ENCODE measurements at regions of chr16 and their contacts with region 1.

Region 1: DNA sequence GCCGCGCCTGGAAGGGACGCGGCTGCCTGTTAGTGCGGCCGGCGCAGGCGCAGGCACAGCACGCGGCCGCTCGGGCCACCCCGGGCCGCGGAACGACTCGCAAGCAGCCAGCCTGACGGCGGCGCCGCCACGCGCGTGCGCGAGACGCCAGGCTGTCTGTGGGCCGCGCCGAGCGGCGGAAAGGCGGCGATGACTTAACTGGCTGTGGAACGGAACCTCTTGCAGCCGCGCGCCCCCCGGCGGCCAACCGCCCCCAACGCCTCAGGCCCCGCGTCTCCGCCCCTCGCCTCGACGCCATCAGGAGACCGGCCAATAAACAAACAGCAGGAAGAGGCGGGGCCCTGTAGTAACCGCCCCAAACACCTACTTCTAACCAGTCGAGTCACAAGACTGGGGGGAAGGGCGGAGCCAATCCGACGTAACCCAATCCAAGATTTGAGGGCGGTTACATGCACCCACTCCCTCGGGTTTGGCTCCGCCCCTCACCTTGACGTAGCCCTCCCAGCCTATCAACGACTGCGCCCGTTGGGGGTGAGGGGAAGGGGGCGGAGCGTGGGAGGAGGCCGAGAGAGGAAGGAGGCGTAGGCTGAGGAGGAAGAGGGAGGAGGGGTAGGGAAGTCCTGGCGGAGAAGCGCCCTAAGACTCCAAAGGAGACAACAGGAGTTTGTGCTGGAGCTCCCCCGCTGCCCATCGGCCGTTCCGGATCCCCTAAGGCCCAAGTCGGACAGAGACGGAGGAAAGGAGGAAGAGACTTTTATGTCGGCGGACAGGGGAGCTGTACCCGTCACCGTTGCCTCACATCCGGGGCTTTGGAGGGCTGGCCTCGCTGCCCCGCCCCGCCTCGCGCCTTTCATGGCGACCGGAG is at the start of gene FBRS:
- DNase-seq: peak; percentile 100
- H3K4me3 ChIP-seq: peak within 1 kb of the TSS; percentile 70
- H3K27ac ChIP-seq: peak within 1 kb of the TSS; percentile 97 to 100
- H3K4me1 ChIP-seq: peaks cover 11% of the 10 kb centered on the region
- H3K27me3 ChIP-seq: no peaks in the 10 kb centered on the region
- CTCF ChIP-seq: peak; percentile 89 to 98 (median 92)
- EP300 ChIP-seq: peak; percentile 78
- POLR2A ChIP-seq: peak; percentile 99
- total RNA-seq, gene FBRS: 22.5 to 75.6 (median 63.0) TPM

Region 2: GRCh38 chr16:30370444-30371247 is 287.5 kb before region 1 on chr16 and contains the start of gene TBC1D10B:
- intact Hi-C with region 1: loop called in 1 of 4 experiments (anchors 10 kb)
- DNase-seq: peak; percentile 96 to 100 (median 98)
- H3K4me3 ChIP-seq: peak within 1 kb of the TSS; percentile 72
- H3K27ac ChIP-seq: peak within 1 kb of the TSS; percentile 77 to 81
- H3K4me1 ChIP-seq: peaks cover 6% of the 10 kb centered on the region
- H3K27me3 ChIP-seq: no peaks in the 10 kb centered on the region
- CTCF ChIP-seq: peak in 1 of 3 donors; percentile 43
- EP300 ChIP-seq: no peak
- POLR2A ChIP-seq: no peak
- total RNA-seq, gene TBC1D10B: 18.4 to 46.9 (median 38.0) TPM

Region 3: DNA sequence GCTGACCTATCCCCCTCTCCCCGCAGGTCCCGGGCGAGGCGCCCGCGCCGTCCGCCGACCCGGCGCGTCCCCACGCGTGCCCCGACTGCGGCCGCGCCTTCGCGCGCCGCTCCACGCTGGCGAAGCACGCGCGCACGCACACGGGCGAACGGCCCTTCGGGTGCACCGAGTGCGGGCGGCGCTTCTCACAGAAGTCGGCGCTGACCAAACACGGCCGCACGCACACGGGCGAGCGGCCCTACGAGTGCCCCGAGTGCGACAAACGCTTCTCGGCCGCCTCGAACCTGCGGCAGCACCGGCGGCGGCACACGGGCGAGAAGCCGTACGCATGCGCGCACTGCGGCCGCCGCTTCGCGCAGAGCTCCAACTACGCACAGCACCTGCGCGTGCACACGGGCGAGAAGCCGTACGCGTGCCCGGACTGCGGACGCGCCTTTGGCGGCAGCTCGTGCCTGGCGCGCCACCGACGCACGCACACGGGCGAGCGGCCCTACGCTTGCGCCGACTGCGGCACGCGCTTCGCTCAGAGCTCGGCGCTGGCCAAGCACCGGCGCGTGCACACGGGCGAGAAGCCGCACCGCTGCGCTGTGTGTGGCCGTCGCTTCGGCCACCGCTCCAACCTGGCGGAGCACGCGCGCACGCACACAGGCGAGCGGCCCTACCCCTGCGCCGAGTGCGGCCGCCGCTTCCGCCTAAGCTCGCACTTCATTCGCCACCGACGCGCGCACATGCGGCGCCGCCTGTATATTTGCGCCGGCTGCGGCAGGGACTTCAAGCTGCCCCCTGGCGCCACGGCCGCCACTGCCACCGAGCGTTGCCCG is 240.4 kb before region 1 on chr16:
- intact Hi-C with region 1: no loop called
- DNase-seq: peak; percentile 75 to 91 (median 84)
- H3K4me3 ChIP-seq: peak overlapping the region; percentile 46
- H3K27ac ChIP-seq: peak overlapping the region; percentile 3 to 69
- H3K4me1 ChIP-seq: peaks cover 5% of the 10 kb centered on the region
- H3K27me3 ChIP-seq: no peaks in the 10 kb centered on the region
- CTCF ChIP-seq: no peak
- EP300 ChIP-seq: no peak
- POLR2A ChIP-seq: no peak

Region 4: GRCh38 chr16:30585400-30586189 is 72.5 kb before region 1 on chr16 and contains the start of gene ZNF785:
- intact Hi-C with region 1: loop called in 1 of 4 experiments (anchors 10 kb)
- DNase-seq: peak; percentile 94 to 98 (median 96)
- H3K4me3 ChIP-seq: peak within 1 kb of the TSS; percentile 70
- H3K27ac ChIP-seq: peak within 1 kb of the TSS; percentile 84 to 91
- H3K4me1 ChIP-seq: peaks cover 5% of the 10 kb centered on the region
- H3K27me3 ChIP-seq: no peaks in the 10 kb centered on the region
- CTCF ChIP-seq: peak in 2 of 3 donors; percentile 20 to 53
- EP300 ChIP-seq: no peak
- POLR2A ChIP-seq: peak; percentile 23
- total RNA-seq, gene ZNF785: 7.0 to 29.4 (median 22.2) TPM

Region 5: GRCh38 chr16:30698139-30698815 is 40.2 kb after region 1 on chr16:
- intact Hi-C with region 1: loop called in 2 of 4 experiments (anchors 5 kb)
- DNase-seq: peak; percentile 99
- H3K4me3 ChIP-seq: peak overlapping the region; percentile 73
- H3K27ac ChIP-seq: peak overlapping the region; percentile 97 to 99
- H3K4me1 ChIP-seq: peaks cover 5% of the 10 kb centered on the region
- H3K27me3 ChIP-seq: no peaks in the 10 kb centered on the region
- CTCF ChIP-seq: no peak
- EP300 ChIP-seq: peak; percentile 44
- POLR2A ChIP-seq: peak; percentile 69

Region 6: DNA sequence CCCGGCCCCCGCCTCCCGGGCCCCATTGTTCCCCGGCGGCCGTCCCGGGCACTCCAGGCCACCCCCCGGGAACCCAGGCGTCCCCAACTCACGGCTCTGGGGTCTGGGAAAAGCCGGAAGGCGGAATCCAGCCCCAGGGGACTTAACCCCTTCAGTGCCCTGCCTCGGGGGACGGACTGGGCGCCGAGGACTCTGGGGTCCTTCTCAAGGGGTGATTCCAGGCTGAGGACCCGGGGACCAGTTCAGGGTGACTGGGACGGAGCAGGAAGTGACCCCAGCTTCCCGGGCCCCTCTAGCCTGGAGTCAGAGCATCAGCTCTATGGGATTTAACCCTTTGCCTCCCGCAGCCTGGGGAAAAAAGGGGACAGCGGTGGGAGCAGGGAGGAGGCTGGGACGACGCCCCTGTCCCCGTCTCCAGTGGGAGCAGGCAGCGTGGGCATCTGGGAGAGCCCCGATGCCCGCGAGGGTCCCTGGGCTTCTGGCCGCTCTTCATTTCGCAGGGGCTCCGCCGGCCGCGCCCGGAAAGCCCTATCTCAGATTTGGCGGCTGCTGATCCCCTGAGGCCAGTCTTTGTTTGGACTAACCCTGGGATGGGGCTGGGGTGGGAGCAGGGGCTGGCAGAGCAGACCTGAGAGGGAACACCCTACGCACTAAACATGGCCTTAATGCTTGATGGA is 129.0 kb after region 1 on chr16 and contains the start of gene ZNF629:
- intact Hi-C with region 1: no loop called
- DNase-seq: peak; percentile 74 to 82 (median 78)
- H3K4me3 ChIP-seq: peak within 1 kb of the TSS; percentile 91
- H3K27ac ChIP-seq: peak within 1 kb of the TSS; percentile 65 to 87
- H3K4me1 ChIP-seq: peaks cover 7% of the 10 kb centered on the region
- H3K27me3 ChIP-seq: no peaks in the 10 kb centered on the region
- CTCF ChIP-seq: no peak
- EP300 ChIP-seq: no peak
- POLR2A ChIP-seq: no peak
- total RNA-seq, gene ZNF629: 9.4 to 26.3 (median 21.9) TPM

Measured in ovary (tissue), 10 donors.